ENCODE measurements at regions of chr2 and their contacts with region 1.

Region 1: GRCh38 chr2:62195421-62196277 is at the start of gene B3GNT2:
- DNase-seq: peak; percentile 95
- H3K4me3 ChIP-seq: peak within 1 kb of the TSS; percentile 96 to 99 (median 98)
- H3K27ac ChIP-seq: peak within 1 kb of the TSS; percentile 94 to 97 (median 95)
- H3K4me1 ChIP-seq: peaks cover 32 to 49% (median 41%) of the 10 kb centered on the region in 4 donors
- H3K27me3 ChIP-seq: no peaks in the 10 kb centered on the region
- CTCF ChIP-seq: no peak
- EP300 ChIP-seq: no peak
- POLR2A ChIP-seq: no peak
- total RNA-seq, gene B3GNT2: 11.6 to 16.3 (median 14.5) TPM

Region 2: GRCh38 chr2:61910603-61911002 is 285.0 kb before region 1 on chr2:
- intact Hi-C with region 1: loop called (anchors 10 kb)
- DNase-seq: no peak
- H3K4me3 ChIP-seq: no peak overlapping the region
- H3K27ac ChIP-seq: no peak overlapping the region
- H3K4me1 ChIP-seq: peaks cover 12 to 30% (median 20%) of the 10 kb centered on the region in 4 donors
- H3K27me3 ChIP-seq: no peaks in the 10 kb centered on the region
- CTCF ChIP-seq: peak in 2 of 3 experiments; percentile 14 to 34
- EP300 ChIP-seq: no peak
- POLR2A ChIP-seq: no peak

Region 3: DNA sequence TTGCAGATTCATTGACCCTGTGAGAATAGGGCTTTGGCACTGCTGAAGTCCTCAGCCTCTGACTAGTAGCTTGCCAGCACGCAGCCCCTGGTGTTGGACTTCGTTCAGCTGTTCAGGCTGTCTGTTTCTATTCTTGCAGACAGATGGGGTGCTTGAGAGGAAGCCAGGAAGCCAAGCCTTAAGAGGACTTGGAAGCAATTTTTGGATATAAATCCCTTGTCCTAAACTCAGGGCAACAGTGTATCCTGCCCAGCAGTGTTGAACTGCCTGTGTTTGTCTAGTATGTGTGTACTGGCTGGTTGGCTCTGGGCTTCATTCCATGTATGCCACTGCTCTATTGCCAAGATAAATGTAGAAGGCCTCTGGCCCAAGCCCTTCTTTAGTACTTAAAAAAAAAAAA is 181.5 kb before region 1 on chr2:
- intact Hi-C with region 1: loop called (anchors 10 kb)
- DNase-seq: no peak
- H3K4me3 ChIP-seq: no peak overlapping the region
- H3K27ac ChIP-seq: peak overlapping the region; percentile 23 to 56 (median 50)
- H3K4me1 ChIP-seq: peaks cover 18 to 38% (median 33%) of the 10 kb centered on the region in 4 donors
- H3K27me3 ChIP-seq: no peaks in the 10 kb centered on the region
- CTCF ChIP-seq: peak in 2 of 3 experiments; percentile 25 to 43
- EP300 ChIP-seq: no peak
- POLR2A ChIP-seq: no peak

Region 4: DNA sequence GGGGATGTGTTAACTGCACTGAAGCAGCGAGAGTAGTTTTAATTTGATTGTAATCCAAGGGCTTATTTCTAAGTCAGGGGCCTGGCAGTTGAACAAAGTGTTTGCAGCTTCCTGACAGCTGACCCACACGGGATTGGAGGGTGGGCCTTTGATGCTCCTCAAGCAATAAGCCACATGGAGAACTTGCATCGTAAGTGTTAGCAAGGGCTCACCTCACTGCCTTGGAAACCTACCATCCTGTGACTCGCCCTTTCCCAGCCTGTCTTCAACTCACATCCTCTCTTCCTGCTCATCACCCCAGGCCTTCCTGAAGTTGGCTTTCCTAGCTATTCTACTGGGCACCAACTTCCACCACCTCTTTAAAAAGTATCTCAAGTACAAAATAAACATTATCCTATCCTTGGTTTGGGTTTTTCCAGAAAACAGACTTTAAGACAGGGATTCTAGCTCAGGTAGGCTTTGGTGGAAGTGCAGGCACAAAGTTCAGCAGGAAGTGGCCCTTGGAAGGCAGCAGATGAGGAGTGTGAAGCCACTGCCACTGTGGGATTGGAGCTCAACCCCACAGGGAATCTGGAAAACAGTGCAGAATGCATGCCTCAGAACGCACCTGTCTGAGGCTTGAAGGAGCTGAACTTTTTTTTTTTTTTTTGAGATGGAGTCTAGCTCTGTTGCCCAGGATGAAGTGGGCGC is 31.9 kb after region 1 on chr2:
- intact Hi-C with region 1: no loop called
- DNase-seq: no peak
- H3K4me3 ChIP-seq: no peak overlapping the region
- H3K27ac ChIP-seq: no peak overlapping the region
- H3K4me1 ChIP-seq: peaks cover 0 to 4% (median 0%) of the 10 kb centered on the region in 4 donors
- H3K27me3 ChIP-seq: no peaks in the 10 kb centered on the region
- CTCF ChIP-seq: no peak
- EP300 ChIP-seq: no peak
- POLR2A ChIP-seq: no peak

Region 5: GRCh38 chr2:62293490-62294271 is 98.0 kb after region 1 on chr2:
- intact Hi-C with region 1: loop called (anchors 5 kb)
- DNase-seq: no peak
- H3K4me3 ChIP-seq: peak overlapping the region; percentile 16 to 24 (median 16)
- H3K27ac ChIP-seq: peak overlapping the region; percentile 68 to 73 (median 70)
- H3K4me1 ChIP-seq: peaks cover 29 to 36% (median 33%) of the 10 kb centered on the region in 4 donors
- H3K27me3 ChIP-seq: no peaks in the 10 kb centered on the region
- CTCF ChIP-seq: no peak
- EP300 ChIP-seq: no peak
- POLR2A ChIP-seq: no peak

Measured in esophagus muscularis mucosa (tissue), 4 donors.